ENCODE measurements at regions of chr4 and their contacts with region 1.

Region 1: GRCh38 chr4:75940692-75941253 is at the start of gene NAAA:
- DNase-seq: peak; percentile 87
- ATAC-seq: peak; percentile 85
- H3K4me3 Mint-ChIP-seq: peak within 1 kb of the TSS; percentile 97
- H3K27ac Mint-ChIP-seq: peak within 1 kb of the TSS; percentile 97
- H3K4me1 Mint-ChIP-seq: peaks cover 7% of the 10 kb centered on the region
- H3K27me3 Mint-ChIP-seq: no peaks in the 10 kb centered on the region
- total RNA-seq, gene NAAA: 21.2 to 26.8 TPM

Region 2: GRCh38 chr4:75980576-75980975 is 39.8 kb after region 1 on chr4:
- CTCF ChIA-PET with region 1: no interaction called
- POLR2A ChIA-PET with region 1: no interaction called
- intact Hi-C with region 1: no loop called
- DNase-seq: no peak
- ATAC-seq: no peak
- H3K4me3 Mint-ChIP-seq: no peak overlapping the region
- H3K27ac Mint-ChIP-seq: no peak overlapping the region
- H3K4me1 Mint-ChIP-seq: no peaks in the 10 kb centered on the region
- H3K27me3 Mint-ChIP-seq: no peaks in the 10 kb centered on the region

Region 3: DNA sequence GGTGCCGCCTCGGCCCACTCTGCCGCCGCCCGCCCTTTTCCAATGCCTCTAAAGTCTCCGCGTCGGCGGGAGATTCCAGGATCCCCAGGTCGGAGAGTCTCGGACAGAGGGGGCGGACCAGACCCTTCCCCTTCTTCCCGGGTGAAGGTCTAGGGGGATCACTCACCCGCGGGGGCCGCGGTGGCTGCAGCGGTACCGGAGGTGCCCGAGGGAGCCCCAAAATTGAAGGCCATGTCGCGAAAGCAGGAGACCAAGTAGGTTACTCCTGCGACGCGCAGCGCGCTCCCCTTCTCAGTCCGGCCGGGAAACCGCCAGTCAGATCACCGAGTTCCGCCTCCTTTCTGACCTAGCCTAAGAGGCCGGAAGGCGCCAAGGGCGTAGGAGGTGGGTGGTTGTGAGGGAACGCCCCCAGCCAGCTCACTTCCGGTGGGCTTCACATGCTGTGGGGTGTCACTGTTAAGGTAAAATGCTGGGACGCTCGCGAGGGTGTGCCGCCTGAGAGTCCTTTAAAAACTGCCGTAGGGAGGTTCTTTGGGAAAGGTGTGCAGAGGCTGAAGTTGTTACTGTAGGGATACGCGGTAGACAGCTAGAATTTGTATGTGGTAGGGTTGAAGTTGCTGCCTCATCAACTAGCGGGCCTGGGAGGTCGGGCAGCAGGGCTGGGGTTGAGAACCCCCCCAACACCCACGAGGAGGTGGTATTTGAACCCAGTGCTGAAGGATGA is 207.5 kb after region 1 on chr4 and contains the start of gene NUP54:
- CTCF ChIA-PET with region 1: no interaction called
- POLR2A ChIA-PET with region 1: no interaction called
- intact Hi-C with region 1: loop called in 1 of 2 experiments (anchors 1 kb)
- DNase-seq: peak; percentile 97
- ATAC-seq: peak; percentile 97
- H3K4me3 Mint-ChIP-seq: peak within 1 kb of the TSS; percentile 86
- H3K27ac Mint-ChIP-seq: peak within 1 kb of the TSS; percentile 89
- H3K4me1 Mint-ChIP-seq: peaks cover 25% of the 10 kb centered on the region
- H3K27me3 Mint-ChIP-seq: no peaks in the 10 kb centered on the region
- total RNA-seq, gene NUP54: 58.2 to 67.3 TPM